PC-9 (cell line): ENCODE measurements at regions of chr22 and their contacts with region 1.

Region 1: DNA sequence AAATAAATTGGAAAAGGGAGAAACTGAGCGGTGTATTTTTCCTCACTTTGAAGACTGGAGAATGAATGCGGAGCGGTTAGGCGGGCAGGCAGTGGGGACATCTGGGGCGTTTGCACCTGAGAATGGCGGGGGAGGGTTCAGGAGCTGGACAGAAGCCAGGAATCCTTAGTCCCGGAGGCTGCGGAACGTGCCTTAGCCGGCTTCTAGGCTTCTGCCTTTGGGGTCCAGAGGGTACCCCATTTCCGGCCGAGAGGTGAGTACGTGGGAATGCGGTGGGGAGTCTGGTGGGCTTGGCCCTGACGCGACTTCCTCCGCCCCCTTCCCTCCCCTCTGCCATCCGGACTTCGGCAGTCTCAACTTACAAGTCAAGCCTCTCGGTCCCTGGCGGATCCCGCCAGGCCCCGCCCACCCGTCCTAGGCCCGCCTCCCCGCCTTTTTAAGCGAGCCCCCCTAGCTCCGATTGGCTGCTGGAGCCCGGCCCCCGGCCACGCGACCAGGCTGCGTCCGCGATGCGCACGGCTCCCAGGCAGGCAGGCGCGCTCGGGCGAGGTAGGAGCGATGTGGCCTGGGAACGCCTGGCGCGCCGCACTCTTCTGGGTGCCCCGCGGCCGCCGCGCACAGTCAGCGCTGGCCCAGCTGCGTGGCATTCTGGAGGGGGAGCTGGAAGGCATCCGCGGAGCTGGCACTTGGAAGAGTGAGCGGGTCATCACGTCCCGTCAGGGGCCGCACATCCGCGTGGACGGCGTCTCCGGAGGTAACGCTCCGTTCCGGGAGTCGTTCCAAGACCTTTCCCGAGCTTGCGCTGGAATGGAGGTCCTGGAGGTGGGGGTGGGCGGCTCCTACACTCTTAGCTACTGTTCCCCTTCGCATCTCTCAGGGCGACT is at the start of gene GCAT:
- DNase-seq: peak; percentile 96
- H3K4me3 ChIP-seq: peak within 1 kb of the TSS; percentile 100
- H3K27ac ChIP-seq: no peak within 1 kb of the TSS
- H3K4me1 ChIP-seq: peaks cover 18% of the 10 kb centered on the region
- H3K27me3 ChIP-seq: no peaks in the 10 kb centered on the region
- CTCF ChIP-seq: no peak
- total RNA-seq, gene GCAT: 32.3 and 37.7 TPM in 2 replicates

Region 2: GRCh38 chr22:37643225-37643847 is 164.3 kb before region 1 on chr22:
- CTCF ChIA-PET with region 1: no interaction called
- POLR2A ChIA-PET with region 1: interaction called, 13 read pairs
- intact Hi-C with region 1: no loop called
- DNase-seq: peak; percentile 65 to 86
- H3K4me3 ChIP-seq: no peak overlapping the region
- H3K27ac ChIP-seq: no peak overlapping the region
- H3K4me1 ChIP-seq: peaks cover 31% of the 10 kb centered on the region
- H3K27me3 ChIP-seq: no peaks in the 10 kb centered on the region
- CTCF ChIP-seq: peak; percentile 99

Region 3: DNA sequence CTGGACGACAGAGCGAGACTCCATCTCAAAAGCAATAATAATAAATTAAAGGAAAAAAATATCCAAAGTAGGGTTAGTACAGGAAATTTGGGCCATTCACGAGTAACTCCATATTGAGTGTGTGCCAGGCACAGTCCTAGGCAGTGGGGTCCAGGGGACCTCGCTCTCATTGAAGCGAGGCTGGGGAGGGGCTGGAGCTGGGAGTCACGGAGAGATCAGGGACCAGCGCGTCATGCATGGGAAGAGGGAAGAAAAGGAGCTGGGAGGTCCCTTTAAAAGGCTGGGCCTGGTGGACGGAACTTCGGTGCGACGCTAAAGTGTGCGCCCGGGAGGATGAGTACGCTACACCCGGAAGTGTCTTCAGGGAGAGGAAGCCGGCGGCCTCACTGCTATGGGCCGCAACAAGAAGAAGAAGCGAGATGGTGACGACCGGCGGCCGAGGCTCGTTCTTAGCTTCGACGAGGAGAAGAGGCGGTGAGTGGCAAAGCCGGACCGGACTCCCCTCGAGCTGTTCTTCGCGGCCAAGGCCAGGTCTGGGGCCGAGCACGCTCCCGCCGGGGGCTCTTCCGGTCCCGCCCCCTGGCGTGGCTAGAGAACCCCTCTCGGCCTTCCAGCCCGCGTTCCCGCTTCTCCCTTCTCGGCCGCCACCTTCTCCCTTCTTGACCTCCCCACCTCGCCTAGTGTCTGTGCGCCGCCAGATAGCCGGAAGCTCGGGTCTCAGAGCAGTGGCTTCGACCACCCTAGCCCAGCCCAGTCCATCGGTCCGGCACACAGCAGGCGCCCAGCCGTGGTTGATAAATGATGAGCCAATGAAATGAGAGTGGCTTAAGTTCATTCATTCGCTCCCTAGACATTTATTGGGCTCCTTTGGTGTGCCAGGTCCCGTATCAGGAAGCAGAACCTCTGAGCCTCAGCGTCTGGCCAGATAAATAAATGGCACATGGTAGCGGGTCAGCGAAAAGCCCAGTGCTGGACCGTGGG is 121.4 kb before region 1 on chr22 and contains the start of gene NOL12:
- CTCF ChIA-PET with region 1: interaction called, 5 read pairs
- POLR2A ChIA-PET with region 1: interaction called, 3 read pairs
- intact Hi-C with region 1: loop called (anchors 2 kb)
- DNase-seq: peak; percentile 83 to 86
- H3K4me3 ChIP-seq: peak within 1 kb of the TSS; percentile 94
- H3K27ac ChIP-seq: peak within 1 kb of the TSS; percentile 59
- H3K4me1 ChIP-seq: peaks cover 47% of the 10 kb centered on the region
- H3K27me3 ChIP-seq: no peaks in the 10 kb centered on the region
- CTCF ChIP-seq: 0 out of 2 replicates have a peak, but pooled peaks have one; percentile 26
- total RNA-seq, gene NOL12: 42.1 and 44.3 TPM in 2 replicates

Region 4: GRCh38 chr22:37741312-37741795 is 66.3 kb before region 1 on chr22:
- CTCF ChIA-PET with region 1: no interaction called
- POLR2A ChIA-PET with region 1: interaction called, 15 read pairs
- intact Hi-C with region 1: no loop called
- DNase-seq: no peak
- H3K4me3 ChIP-seq: no peak overlapping the region
- H3K27ac ChIP-seq: peak overlapping the region; percentile 57
- H3K4me1 ChIP-seq: peaks cover 43% of the 10 kb centered on the region
- H3K27me3 ChIP-seq: no peaks in the 10 kb centered on the region
- CTCF ChIP-seq: no peak

Region 5: GRCh38 chr22:37784829-37785493 is 22.7 kb before region 1 on chr22:
- CTCF ChIA-PET with region 1: interaction called, 3 read pairs
- POLR2A ChIA-PET with region 1: no interaction called
- intact Hi-C with region 1: loop called (anchors 2 kb)
- DNase-seq: peak; percentile 88 to 97
- H3K4me3 ChIP-seq: no peak overlapping the region
- H3K27ac ChIP-seq: peak overlapping the region; percentile 74
- H3K4me1 ChIP-seq: peaks cover 49% of the 10 kb centered on the region
- H3K27me3 ChIP-seq: no peaks in the 10 kb centered on the region
- CTCF ChIP-seq: no peak

Region 6: GRCh38 chr22:37824674-37825641 is 17.3 kb after region 1 on chr22:
- CTCF ChIA-PET with region 1: interaction called, 11 read pairs
- POLR2A ChIA-PET with region 1: no interaction called
- intact Hi-C with region 1: no loop called
- DNase-seq: no peak
- H3K4me3 ChIP-seq: no peak overlapping the region
- H3K27ac ChIP-seq: no peak overlapping the region
- H3K4me1 ChIP-seq: no peaks in the 10 kb centered on the region
- H3K27me3 ChIP-seq: no peaks in the 10 kb centered on the region
- CTCF ChIP-seq: no peak

Region 7: GRCh38 chr22:37843741-37843990 is 36.0 kb after region 1 on chr22:
- CTCF ChIA-PET with region 1: no interaction called
- POLR2A ChIA-PET with region 1: interaction called, 13 read pairs
- intact Hi-C with region 1: loop called (anchors 5 kb)
- DNase-seq: no peak
- H3K4me3 ChIP-seq: peak overlapping the region; percentile 92
- H3K27ac ChIP-seq: peak overlapping the region; percentile 35
- H3K4me1 ChIP-seq: peaks cover 23% of the 10 kb centered on the region
- H3K27me3 ChIP-seq: no peaks in the 10 kb centered on the region
- CTCF ChIP-seq: no peak

Region 8: DNA sequence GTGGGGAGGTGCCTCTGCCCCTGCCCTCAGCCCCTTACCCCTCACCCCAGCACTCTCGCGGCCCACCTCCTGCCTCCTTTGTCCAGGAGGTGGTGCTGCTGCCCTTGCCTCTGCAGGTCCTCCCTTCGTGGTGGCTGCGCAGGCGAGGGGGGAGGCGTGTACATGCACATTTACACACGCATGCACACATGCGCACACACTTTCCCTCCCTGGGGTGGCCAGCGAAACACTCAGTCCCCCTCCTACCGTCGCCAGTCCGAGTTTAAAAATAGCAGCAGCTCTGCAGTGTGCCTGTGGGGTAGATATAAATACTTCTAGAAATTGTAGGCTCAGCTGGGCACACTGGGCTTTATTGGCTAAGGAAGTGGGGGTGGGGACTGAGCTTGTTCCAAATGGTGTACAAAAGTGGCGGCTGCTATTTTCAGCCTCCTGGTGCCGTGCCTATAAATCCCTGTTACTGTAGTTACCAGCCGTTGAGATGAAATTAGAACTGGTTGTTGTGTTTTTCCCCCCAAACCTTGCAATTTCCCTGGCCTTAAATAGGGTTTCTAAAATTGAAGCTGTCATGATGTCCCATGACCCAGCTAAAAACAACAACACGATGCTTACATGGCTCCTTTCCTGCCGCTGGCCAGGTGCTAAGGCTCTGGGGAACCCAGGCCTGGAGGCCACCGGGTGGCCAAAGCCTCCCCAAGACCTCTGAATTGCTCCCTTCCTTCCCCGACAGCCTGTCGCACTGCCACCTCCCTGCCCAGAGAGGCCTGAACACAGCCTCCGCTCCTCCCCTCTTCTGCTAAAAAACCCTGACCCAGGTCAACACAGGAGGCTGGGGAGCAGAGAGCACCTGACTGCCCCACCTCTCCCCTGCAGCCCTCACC is 262.0 kb after region 1 on chr22:
- CTCF ChIA-PET with region 1: no interaction called
- POLR2A ChIA-PET with region 1: no interaction called
- intact Hi-C with region 1: no loop called
- DNase-seq: no peak
- H3K4me3 ChIP-seq: no peak overlapping the region
- H3K27ac ChIP-seq: no peak overlapping the region
- H3K4me1 ChIP-seq: no peaks in the 10 kb centered on the region
- H3K27me3 ChIP-seq: no peaks in the 10 kb centered on the region
- CTCF ChIP-seq: peak; percentile 51